ENCODE measurements at regions of chr3 and their contacts with region 1.

Region 1: DNA sequence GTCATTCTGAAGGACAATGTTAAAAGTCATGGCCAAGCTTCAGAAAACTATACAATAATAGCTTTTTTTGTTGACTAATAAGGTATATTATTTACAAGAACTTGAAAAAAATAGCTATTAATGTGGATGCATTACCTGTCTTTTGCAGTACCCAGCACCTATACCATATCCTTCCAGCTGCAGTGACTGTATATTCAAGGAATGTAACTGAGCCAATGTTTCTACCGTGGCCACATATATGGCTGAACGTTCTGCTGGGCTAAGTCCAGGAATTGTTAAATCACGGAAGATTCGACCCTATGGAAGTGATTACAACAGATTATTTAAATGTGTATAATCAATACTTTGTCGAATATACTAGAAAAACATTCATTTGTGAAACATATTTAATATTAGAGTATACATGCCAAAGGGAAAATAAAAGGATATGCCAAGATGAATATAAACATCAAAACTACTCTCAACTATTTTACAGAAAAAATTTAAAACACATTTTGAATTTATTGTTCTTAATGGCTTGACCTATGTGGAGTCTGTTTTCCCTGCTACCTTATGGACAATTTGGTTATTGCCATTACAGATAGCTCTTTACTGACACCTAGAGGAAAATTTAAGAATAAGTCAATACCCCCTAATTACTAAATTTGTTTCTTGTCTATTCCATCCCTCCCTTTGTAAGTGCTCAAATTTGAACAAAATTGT is 17.6 kb downstream of the ACAD11 start:
- DNase-seq: no peak
- H3K4me3 Mint-ChIP-seq: no peak overlapping the region
- H3K27ac Mint-ChIP-seq: no peak overlapping the region
- H3K4me1 Mint-ChIP-seq: peaks cover 7% of the 10 kb centered on the region
- H3K27me3 Mint-ChIP-seq: no peaks in the 10 kb centered on the region

Region 2: DNA sequence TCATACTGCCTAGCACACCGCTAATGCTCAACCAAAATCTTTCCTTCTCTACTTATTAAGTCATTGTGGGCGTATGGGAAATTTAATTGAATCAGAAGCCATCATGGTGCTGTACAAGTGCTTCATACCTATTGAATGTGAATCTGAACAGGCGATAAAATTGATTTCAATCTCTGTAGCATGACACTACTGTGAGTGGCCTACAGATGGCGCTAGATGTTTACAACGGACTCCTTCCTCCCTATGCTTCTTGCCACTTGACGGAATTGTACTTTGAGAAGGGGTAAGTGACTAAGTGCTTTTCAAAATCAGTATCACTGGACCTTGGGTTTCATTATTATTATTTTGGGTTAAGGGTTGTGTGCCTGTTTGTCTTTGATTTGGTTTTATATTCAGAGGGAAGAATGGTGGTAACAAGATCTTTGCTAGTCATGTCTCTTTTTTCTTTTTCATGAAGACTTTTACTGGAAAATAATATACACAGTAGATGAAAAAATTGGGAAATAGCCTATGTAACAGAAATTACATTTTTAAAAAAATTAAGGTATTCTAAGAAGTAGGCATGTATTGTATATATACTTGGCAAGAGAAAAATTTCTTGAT is 289.3 kb before region 1 on chr3:
- intact Hi-C with region 1: loop called (anchors 1 kb)
- DNase-seq: peak; percentile 89
- H3K4me3 Mint-ChIP-seq: no peak overlapping the region
- H3K27ac Mint-ChIP-seq: no peak overlapping the region
- H3K4me1 Mint-ChIP-seq: peaks cover 1% of the 10 kb centered on the region
- H3K27me3 Mint-ChIP-seq: peaks cover 19% of the 10 kb centered on the region

Region 3: GRCh38 chr3:133246119-133246518 is 604.1 kb after region 1 on chr3:
- intact Hi-C with region 1: no loop called
- DNase-seq: no peak
- H3K4me3 Mint-ChIP-seq: no peak overlapping the region
- H3K27ac Mint-ChIP-seq: no peak overlapping the region
- H3K4me1 Mint-ChIP-seq: no peaks in the 10 kb centered on the region
- H3K27me3 Mint-ChIP-seq: peaks cover 3% of the 10 kb centered on the region

Measured in activated CD4-positive, alpha-beta T cell treated with anti-CD3 and anti-CD28 coated beads, Interleukin-2, amount 10 ng/mL, durations not matched to agents 24 days and 14 days (primary cell).